PC-3 (cell line): ENCODE measurements at regions of chr3 and their contacts with region 1.

Region 1: GRCh38 chr3:168095611-168096209 is at the start of gene GOLIM4:
- DNase-seq: peak; percentile 97
- ATAC-seq: peak; percentile 87
- H3K4me3 ChIP-seq: peak within 1 kb of the TSS; percentile 89
- H3K27ac ChIP-seq: peak within 1 kb of the TSS; percentile 82
- H3K4me1 ChIP-seq: peaks cover 35% of the 10 kb centered on the region
- H3K27me3 ChIP-seq: no peaks in the 10 kb centered on the region
- CTCF ChIP-seq: no peak
- total RNA-seq, gene GOLIM4: 25.3 and 28.5 TPM in 2 replicates

Region 2: GRCh38 chr3:168024537-168024941 is 71.2 kb before region 1 on chr3:
- CTCF ChIA-PET with region 1: no interaction called
- POLR2A ChIA-PET with region 1: no interaction called
- intact Hi-C with region 1: no loop called
- DNase-seq: peak; percentile 82
- ATAC-seq: peak; percentile 98
- H3K4me3 ChIP-seq: no peak overlapping the region
- H3K27ac ChIP-seq: peak overlapping the region; percentile 83
- H3K4me1 ChIP-seq: peaks cover 16% of the 10 kb centered on the region
- H3K27me3 ChIP-seq: no peaks in the 10 kb centered on the region
- CTCF ChIP-seq: no peak

Region 3: GRCh38 chr3:168047190-168047795 is 48.4 kb before region 1 on chr3:
- CTCF ChIA-PET with region 1: interaction called, 7 read pairs
- POLR2A ChIA-PET with region 1: no interaction called
- intact Hi-C with region 1: loop called (anchors 2 kb)
- DNase-seq: peak; percentile 90
- ATAC-seq: peak; percentile 81
- H3K4me3 ChIP-seq: no peak overlapping the region
- H3K27ac ChIP-seq: no peak overlapping the region
- H3K4me1 ChIP-seq: no peaks in the 10 kb centered on the region
- H3K27me3 ChIP-seq: no peaks in the 10 kb centered on the region
- CTCF ChIP-seq: peak; percentile 97

Region 4: GRCh38 chr3:168077091-168077490 is 18.6 kb before region 1 on chr3:
- CTCF ChIA-PET with region 1: no interaction called
- POLR2A ChIA-PET with region 1: no interaction called
- intact Hi-C with region 1: loop called (anchors 1 kb)
- DNase-seq: peak; percentile 69
- ATAC-seq: peak; percentile 92
- H3K4me3 ChIP-seq: no peak overlapping the region
- H3K27ac ChIP-seq: peak overlapping the region; percentile 65
- H3K4me1 ChIP-seq: peaks cover 26% of the 10 kb centered on the region
- H3K27me3 ChIP-seq: no peaks in the 10 kb centered on the region
- CTCF ChIP-seq: no peak

Region 5: DNA sequence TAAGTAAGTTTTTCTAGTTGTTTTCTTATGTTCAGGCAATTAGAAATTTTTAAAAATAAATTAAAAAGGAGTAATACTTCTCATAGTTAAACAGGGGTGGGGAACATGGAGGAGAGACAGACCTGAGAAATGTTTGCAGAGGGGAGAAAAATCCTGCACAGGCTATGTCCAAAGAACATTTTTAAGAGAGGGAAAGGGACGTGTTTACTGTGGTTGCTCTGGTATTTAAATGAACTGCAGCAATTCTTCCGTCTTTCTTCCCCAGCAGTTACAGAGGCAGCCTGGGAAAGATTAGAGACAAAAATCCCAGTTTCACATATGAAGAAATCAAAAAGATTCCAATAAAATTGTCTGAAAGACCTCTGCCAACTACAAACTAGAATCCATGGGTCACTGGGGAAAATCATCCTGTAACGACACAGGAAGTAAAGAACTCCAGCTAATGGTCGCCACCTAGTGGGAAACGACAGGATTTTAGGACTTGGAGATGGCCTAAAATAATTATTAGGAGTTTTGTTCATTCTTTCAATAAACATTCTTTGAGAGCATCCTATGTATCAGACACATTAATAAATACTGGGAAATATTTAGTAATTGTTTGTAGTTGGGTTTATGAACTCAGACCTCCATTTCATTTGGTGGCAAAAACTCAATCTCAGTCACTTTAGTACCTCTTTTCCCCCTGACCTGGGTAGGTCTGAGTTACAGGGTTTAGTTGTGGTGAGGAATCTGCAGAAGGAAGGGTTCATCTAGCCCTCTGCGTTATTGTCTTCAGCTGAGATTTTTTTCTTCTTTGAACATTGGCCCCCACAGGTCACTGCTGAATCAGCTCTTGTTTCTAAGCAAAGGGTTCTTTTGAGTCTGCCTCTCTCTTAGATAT is 69.9 kb after region 1 on chr3:
- CTCF ChIA-PET with region 1: no interaction called
- POLR2A ChIA-PET with region 1: no interaction called
- intact Hi-C with region 1: loop called (anchors 1 kb)
- DNase-seq: peak; percentile 85
- ATAC-seq: peak; percentile 74
- H3K4me3 ChIP-seq: no peak overlapping the region
- H3K27ac ChIP-seq: no peak overlapping the region
- H3K4me1 ChIP-seq: no peaks in the 10 kb centered on the region; the same call in 1 of the 2 replicates
- H3K27me3 ChIP-seq: no peaks in the 10 kb centered on the region
- CTCF ChIP-seq: peak; percentile 91

Region 6: GRCh38 chr3:168398371-168399025 is 302.8 kb after region 1 on chr3:
- CTCF ChIA-PET with region 1: no interaction called
- POLR2A ChIA-PET with region 1: no interaction called
- intact Hi-C with region 1: no loop called
- DNase-seq: peak; percentile 76
- ATAC-seq: peak; percentile 98
- H3K4me3 ChIP-seq: no peak overlapping the region
- H3K27ac ChIP-seq: no peak overlapping the region
- H3K4me1 ChIP-seq: peaks cover 9% of the 10 kb centered on the region; the same call in 1 of the 2 replicates
- H3K27me3 ChIP-seq: no peaks in the 10 kb centered on the region
- CTCF ChIP-seq: no peak